Dendritic cell treated with granulocyte-macrophage colony-stimulating factor and Interleukin-4, amounts not matched to agents 40 ng/mL and 50 ng/mL, for 4 days (primary cell): ENCODE measurements at regions of chr3 and their contacts with region 1.

Region 1: DNA sequence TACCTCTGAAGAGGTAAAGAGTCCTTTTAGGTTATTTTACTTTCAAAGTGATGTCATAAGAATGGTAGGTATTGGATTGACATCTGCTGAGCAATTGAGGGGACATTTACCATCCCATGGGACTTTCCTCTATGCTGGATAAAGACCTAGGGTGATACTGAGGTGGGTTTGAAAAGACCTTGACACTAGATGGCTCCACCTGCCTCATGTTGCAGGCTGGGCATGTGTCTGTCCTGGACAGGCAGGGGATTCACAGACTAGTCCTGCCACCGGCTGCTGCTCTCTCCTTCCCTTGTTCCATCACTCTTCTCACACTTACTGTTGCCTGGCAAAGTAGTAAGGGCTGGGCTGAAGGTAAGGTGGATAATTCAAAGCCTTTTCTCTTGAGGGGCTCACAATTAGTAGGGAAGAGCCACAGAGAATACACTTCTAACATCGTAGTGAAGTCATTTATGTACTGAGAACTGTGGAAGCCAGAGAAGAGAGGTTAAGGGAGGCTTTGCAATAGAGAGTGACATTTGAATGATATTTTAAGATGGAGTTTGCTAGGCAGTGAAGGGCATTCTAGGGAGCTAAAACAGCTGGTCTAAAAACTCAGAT is 27.7 kb downstream of the TRAK1 start:
- H3K4me3 Mint-ChIP-seq: no peak overlapping the region
- H3K27ac Mint-ChIP-seq: peak overlapping the region; percentile 15
- H3K4me1 Mint-ChIP-seq: peaks cover 84% of the 10 kb centered on the region
- H3K27me3 Mint-ChIP-seq: no peaks in the 10 kb centered on the region

Region 2: GRCh38 chr3:42190701-42191462 is 72.0 kb after region 1 on chr3:
- intact Hi-C with region 1: loop called (anchors 2 kb)
- H3K4me3 Mint-ChIP-seq: no peak overlapping the region
- H3K27ac Mint-ChIP-seq: peak overlapping the region; percentile 77
- H3K4me1 Mint-ChIP-seq: peaks cover 47% of the 10 kb centered on the region
- H3K27me3 Mint-ChIP-seq: no peaks in the 10 kb centered on the region